Left cardiac atrium (tissue), 4 donors: ENCODE measurements at regions of chr6 and their contacts with region 1.

Region 1: DNA sequence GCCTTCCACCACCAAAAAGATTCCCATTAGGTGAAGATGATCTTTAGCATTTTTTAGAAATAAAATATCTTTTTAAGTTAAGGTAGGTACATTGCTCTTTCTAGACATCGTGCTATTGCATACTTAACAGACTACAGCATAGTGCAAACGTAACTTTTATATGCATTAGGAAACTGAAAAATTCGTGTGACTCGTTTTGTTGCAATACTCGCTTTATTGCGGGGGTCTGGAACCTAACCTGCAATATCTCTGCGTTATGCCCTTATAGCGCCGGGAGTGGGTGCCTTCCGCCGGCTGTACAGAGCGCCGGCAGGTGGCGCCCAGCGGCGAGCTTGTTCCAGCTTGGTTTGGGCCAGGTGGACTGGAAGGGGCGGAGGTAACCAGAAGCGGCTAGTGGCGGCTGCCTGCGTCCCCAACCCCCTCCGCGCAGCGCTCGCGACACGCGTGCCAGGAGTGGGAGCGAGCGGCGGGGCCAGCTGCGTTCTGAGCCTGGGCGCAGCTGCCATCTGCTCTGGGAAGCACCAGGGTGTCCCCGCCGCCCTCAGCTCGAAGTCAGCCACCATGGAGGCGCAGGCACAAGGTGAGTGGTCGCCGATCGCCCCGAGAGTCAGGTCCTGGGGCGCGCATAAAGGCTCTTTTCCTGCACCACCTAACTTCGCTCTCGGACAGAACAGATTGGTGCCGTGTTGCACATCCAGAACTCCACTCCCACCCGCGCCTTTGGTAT is at the start of gene TPD52L1:
- DNase-seq: peak; percentile 84
- ATAC-seq: peak; percentile 94 to 95
- total RNA-seq, gene TPD52L1: 27.9 to 50.4 TPM

Region 2: GRCh38 chr6:125191916-125192609 is 38.5 kb after region 1 on chr6:
- intact Hi-C with region 1: loop called in 1 of 2 experiments (anchors 5 kb)
- DNase-seq: peak; percentile 45
- ATAC-seq: peak; percentile 60 to 84

Region 3: DNA sequence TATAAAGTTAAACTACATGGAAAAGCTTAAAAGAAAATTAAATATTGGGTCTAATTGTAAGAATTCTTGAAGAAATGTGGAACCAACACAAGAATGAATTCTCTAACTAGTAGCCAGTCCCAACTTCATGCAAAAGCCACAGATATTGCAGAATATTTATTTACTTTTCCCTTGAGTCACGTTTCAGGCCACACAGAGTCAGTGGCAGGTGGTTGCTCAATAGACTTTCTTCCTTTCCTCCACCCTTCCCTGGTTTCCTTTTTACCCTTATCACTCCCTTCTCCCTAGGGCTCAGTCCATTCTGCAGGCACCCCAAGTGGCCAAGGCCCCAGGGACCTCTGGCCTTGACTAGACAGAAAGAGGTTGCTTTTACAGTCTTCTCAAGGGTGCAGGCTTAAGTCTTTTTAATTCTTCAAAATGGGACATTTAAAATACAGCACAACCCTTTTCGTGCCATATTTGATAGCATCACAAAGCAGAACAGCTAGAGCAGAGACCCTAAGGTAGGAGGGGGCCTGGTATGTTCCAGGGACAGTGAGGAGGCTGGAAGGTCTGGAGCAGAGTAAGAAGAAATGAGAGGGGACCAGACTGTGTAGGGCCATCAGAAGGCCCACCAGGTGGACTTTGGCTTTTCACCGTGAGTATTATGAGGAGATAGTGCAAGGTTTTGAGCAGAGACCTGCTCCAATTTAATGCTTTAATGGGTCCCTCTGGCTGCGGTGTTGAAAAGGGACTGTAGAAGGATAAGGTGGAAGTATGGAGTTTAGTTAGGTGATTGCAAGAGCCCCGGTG is 83.2 kb after region 1 on chr6:
- intact Hi-C with region 1: loop called in 1 of 2 experiments (anchors 10 kb)
- DNase-seq: no peak
- ATAC-seq: peak in 1 of 2 donors; percentile 23

Region 4: DNA sequence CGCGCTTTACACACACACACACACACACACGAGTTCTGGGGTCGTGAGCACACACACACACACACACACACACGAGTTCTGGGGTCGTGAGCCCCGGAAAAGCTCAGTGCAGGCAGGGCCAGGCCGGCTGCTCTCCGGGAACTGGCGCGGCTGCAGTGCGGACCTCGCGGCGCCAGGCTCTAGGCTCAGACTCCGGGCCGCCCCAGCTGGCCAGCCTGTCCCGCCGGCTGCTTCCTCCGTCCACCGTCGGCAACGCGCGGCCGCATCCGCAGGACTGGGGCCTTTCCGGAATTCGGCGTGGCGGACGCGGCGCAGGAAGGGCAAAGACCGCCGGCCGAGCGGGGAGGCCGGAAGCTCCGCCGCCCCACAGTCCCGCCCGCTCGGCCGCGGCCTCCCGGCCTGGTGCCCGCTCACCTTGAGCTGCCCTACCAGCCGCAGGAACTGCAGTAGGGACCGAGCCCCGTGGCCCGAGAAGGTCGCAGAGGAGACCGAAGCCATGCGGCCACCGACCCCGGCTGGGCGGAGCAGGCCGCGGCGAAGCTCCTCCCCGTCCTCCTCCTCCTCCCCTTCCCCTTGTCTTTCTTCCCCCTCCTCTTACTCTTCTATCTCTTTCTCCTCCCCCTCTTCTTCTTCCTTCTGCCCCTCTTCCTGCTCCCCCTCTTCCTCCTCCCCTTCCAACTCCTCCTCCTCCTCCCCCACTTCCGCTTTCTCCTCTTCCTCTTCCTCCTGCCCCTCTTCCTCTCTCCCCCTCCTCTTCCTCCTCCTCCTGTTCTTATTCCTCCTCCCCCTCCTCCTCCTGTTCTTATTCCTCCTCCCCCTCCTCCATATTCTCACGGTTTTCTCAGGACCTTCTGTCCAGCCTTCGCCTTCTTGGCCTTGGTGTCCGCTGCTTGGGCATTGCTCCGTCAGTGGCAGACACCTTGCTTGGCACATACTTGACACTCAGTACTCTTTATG is 148.2 kb after region 1 on chr6 and contains the start of gene HDDC2:
- intact Hi-C with region 1: loop called (anchors 5 to 10 kb)
- DNase-seq: peak; percentile 86
- ATAC-seq: peak; percentile 94 to 95
- total RNA-seq, gene HDDC2: 78.1 to 80.3 TPM

Region 5: GRCh38 chr6:125714441-125715090 is 561.0 kb after region 1 on chr6:
- intact Hi-C with region 1: no loop called
- DNase-seq: no peak
- ATAC-seq: no peak

Region 6: DNA sequence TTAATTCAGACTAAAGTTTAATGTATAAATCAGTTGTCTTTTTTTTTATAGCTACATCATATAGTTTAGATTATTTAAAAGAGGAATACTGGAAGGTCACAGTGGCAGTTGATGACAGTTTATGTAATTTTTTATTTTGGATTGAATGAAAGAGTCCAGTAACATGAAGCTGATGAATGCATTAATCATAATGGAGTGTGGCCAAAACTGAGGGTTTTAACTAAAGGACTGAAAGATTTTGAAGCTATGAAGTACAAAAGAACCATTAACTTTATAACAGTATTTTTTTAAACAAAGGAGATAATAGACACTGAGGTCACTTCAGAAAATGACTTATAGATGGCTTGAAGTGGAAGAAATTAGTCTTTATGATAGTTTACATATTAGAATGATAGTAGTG is 874.0 kb after region 1 on chr6:
- intact Hi-C with region 1: no loop called
- DNase-seq: no peak
- ATAC-seq: no peak